Right ventricle myocardium inferior (tissue), 1 donor: ENCODE measurements at regions of chrX and their contacts with region 1.

Region 1: GRCh38 chrX:24395775-24396174 is 35.3 kb downstream of the SUPT20HL1 start:
- DNase-seq: no peak
- ATAC-seq: peak; percentile 83

Region 2: GRCh38 chrX:24498975-24499374 is 103.2 kb after region 1 on chrX:
- intact Hi-C with region 1: loop called (anchors 2 kb)
- DNase-seq: no peak
- ATAC-seq: no peak

Region 3: GRCh38 chrX:24561121-24561520 is 165.3 kb after region 1 on chrX:
- intact Hi-C with region 1: loop called (anchors 5 kb)
- DNase-seq: no peak
- ATAC-seq: no peak